Astrocyte of the cerebellum (primary cell): ENCODE measurements at regions of chr5 and their contacts with region 1.

Region 1: DNA sequence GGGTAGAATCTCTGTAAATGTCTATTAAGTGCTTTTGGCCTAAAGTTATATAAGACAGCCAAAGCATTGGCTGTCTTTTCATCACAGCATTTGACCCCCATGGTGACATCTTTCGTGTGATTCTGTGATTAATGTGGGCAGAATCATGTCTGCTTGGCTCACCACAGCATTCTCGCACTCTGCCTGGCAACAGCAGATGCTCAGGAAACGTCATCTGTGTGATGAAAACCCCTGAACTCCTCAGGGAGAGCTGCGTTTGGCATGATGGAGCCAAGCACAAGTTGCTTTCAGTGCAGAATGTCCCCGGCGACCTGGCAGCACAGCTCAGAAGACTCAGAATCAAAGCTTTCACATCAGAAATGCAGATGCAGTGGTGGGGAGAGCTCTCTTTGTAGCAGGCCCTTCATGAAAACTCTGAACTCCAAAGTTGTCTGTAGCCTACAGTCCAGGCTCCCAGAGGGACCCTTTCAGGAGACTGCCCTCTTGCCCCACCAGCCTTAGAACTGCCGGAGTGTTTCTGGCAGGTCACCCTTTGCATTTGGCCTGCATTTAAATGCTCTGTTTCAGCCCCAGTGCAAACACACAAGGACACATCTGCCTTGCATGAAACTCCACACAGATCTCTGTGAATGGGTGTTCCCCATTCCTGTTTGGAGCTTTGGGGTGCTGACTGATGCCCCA is 155.6 kb upstream of the PANK3 start:
- DNase-seq: no peak
- H3K4me3 ChIP-seq: no peak overlapping the region
- CTCF ChIP-seq: no peak

Region 2: DNA sequence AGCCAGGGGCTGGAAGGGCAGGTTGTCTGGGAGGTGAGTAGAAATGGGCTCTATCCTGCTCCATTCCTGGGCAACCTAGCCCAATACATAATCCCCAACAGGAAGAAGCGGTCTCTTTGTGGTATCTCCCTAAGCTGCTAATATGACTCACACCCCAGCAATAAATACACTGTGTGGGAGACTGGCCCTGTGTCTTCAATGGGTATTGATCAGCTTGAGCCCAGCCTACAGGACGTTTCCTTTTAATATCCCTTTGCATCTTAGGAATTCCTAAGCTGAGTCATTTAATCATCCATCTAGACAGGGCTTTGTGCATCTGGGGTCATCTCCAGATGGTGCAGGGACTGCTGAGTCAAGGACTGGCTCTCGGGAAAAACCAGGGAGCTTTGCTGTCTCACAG is 51.4 kb after region 1 on chr5:
- in situ Hi-C with region 1: no loop called
- DNase-seq: no peak
- H3K4me3 ChIP-seq: no peak overlapping the region
- CTCF ChIP-seq: no peak

Region 3: GRCh38 chr5:168813184-168813968 is 78.6 kb after region 1 on chr5:
- in situ Hi-C with region 1: loop called (anchors 5 kb)
- DNase-seq: no peak
- H3K4me3 ChIP-seq: no peak overlapping the region
- CTCF ChIP-seq: no peak